ENCODE measurements at regions of chr5 and their contacts with region 1.

Region 1: GRCh38 chr5:56200856-56201666 is 32.1 kb downstream of the ANKRD55 start:
- DNase-seq: no peak
- H3K4me3 ChIP-seq: no peak overlapping the region
- CTCF ChIP-seq: peak; percentile 74

Region 2: DNA sequence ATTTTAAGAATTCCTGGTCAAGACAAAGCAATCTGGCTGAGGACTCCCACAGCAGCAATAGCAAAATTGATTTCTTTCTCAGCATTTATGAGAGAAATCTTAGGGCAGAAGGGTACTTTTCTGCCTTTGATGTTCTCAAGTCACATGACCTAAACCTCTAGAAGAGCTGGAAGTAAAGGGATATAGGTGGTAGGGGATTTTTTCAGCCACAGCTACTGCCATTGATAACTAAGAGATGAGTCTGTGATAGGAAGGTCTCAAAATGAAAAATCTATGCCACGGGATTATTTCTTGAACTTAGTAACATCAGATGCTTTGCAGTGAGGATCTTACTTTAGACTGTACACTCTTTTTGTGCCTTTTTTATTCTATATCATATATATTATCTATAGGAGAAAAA is 241.9 kb before region 1 on chr5:
- CTCF ChIA-PET with region 1: interaction called, 12 read pairs
- POLR2A ChIA-PET with region 1: no interaction called
- DNase-seq: no peak
- H3K4me3 ChIP-seq: no peak overlapping the region
- CTCF ChIP-seq: no peak

Region 3: GRCh38 chr5:55973296-55973695 is 227.8 kb before region 1 on chr5:
- CTCF ChIA-PET with region 1: interaction called, 16 read pairs
- POLR2A ChIA-PET with region 1: no interaction called
- DNase-seq: no peak
- H3K4me3 ChIP-seq: no peak overlapping the region
- CTCF ChIP-seq: no peak

Region 4: DNA sequence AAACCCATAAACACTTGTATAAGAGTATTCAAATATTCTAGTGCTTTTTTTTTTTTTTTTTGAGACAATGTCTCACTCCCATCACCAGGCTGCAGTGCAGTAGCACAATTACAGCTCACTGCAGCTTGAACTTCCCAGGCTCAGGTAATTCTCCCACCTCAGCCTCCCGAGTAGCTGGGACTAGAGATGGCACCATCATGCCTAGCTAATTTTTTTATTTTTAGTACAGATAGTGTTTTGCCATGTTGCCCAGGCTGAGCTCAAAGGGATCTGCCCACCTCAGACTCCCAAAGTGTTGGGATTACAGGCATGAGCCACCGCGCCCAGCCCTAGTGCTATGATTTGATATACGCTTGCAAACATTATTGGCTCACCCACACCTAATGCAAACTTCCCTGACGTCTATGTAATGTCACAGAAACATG is 218.1 kb before region 1 on chr5:
- CTCF ChIA-PET with region 1: interaction called, 20 read pairs
- POLR2A ChIA-PET with region 1: no interaction called
- DNase-seq: no peak
- H3K4me3 ChIP-seq: no peak overlapping the region
- CTCF ChIP-seq: no peak

Region 5: GRCh38 chr5:55991768-55992486 is 209.1 kb before region 1 on chr5:
- CTCF ChIA-PET with region 1: interaction called, 12 read pairs
- POLR2A ChIA-PET with region 1: no interaction called
- DNase-seq: no peak
- H3K4me3 ChIP-seq: peak overlapping the region; percentile 84
- CTCF ChIP-seq: no peak

Region 6: DNA sequence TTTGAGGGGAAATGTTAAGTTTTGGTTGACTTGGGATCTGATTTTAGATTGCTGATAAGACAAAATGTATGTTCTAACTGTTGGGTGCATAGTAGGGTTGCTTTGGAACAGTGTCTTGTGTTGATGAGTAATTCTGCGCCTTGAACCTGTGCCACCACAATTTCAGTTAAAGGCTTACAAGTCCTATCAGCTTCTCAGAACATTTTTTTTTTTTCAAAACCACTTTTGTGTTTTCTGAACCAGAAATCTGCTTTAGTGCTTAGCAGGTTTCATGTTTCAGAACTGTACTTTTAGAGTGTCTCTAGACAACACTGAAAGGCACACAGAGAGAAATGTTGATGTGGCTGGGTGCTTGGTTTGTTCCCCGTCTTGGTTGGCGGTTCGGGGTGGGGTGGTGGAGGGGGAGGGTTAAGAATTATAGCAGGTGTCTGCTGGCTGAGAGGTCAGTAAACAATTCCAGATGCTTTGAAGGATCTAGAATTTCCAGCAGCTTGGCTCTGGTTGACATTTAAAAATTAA is 52.5 kb before region 1 on chr5:
- CTCF ChIA-PET with region 1: no interaction called
- POLR2A ChIA-PET with region 1: no interaction called
- DNase-seq: no peak
- H3K4me3 ChIP-seq: no peak overlapping the region
- CTCF ChIP-seq: no peak

Measured in AG04449 (cell line).